Aorta (tissue), 5 donors: ENCODE measurements at regions of chr17 and their contacts with region 1.

Region 1: GRCh38 chr17:77834170-77835115 is 124.1 kb upstream of the TNRC6C start:
- DNase-seq: peak; percentile 90 to 92
- ATAC-seq: peak; percentile 55
- H3K4me3 ChIP-seq: no peak overlapping the region
- H3K27ac ChIP-seq: peak overlapping the region in 1 of 2 donors; percentile 43
- H3K4me1 ChIP-seq: no peaks in the 10 kb centered on the region
- H3K27me3 ChIP-seq: no peaks in the 10 kb centered on the region

Region 2: DNA sequence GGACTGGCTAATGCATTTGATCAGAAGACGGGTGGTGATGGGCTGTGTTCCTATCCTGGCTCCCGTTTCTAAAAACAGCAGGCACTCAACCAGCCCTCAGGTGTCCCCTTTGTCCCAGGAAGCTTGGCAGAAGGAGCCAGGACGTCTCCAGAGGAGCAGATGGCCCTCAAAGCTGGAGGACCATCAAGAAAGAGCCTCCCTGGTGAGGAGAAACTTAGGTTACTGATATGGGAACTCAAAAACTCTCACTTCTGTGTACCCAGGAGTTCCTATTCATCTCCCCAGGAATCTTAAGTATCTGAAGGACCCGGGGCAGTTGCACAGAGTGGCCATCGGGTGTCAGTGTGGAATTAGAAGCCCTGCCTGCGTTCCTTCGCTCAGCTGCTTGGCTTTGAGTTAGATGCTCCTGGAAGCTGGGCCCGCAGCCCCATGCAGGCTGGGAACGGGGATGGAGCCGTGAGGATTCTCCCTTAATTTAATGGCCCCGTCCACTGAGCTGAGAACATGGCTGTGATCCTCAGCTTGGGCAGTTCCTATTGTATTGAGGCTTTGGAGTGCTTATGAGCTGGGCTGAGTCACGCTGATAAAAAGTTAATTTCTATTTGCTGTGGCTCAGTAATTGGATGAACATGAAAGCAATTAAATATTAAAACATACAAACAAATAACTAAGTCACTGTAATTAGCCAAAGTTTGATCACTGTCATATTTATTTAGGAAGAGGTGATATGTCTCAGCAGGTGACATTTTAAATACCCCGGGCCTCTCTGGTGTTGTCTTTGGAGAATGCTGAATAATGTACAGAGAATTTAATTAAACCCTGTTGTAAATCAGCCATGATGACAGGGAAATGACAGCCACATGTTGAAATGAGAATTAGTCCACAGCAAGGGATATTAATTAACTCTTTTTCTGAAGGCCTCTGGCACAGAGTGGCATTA is 291.6 kb before region 1 on chr17:
- intact Hi-C with region 1: loop called in 1 of 2 experiments (anchors 5 kb)
- DNase-seq: peak; percentile 89
- ATAC-seq: peak; percentile 94
- H3K4me3 ChIP-seq: no peak overlapping the region
- H3K27ac ChIP-seq: no peak overlapping the region
- H3K4me1 ChIP-seq: no peaks in the 10 kb centered on the region
- H3K27me3 ChIP-seq: no peaks in the 10 kb centered on the region

Region 3: DNA sequence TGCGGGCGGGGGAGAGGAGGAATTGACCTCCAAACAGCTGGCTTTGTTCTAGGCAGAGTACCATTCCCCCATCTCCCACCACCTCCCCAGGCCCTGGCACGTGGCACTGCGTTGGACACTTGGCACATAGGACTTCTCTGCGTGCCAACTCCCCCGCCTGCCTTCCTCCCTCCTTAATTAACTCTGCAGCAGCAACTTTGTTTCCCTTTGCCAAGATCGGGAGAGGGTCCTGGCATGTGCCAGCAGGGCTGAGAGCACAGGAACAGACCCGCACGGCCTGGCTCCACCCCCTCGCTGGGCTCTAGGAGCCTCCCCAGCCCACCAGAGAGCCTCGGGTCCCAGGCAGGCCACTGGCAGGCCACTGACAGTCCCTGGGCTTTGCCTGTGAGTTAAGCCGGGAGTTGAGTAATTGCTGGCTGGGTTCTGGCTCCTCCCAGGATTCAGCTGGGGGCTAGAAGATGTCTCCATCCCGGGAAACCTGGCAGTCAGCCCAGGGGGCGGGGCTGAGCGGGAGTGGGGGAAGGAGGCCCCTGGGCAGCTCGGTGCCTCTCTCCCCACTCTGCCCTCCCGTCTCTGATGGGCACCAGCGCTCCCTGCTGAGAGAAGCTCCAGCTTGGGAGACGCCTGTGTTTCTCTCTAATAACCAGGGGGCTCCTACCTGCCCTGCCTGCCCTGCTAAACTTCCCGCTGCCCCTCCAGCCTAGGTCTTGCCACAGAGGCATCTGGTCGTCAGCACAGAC is 99.9 kb before region 1 on chr17:
- intact Hi-C with region 1: loop called in 1 of 2 experiments (anchors 5 kb)
- DNase-seq: peak; percentile 95 to 96
- ATAC-seq: peak; percentile 84
- H3K4me3 ChIP-seq: no peak overlapping the region
- H3K27ac ChIP-seq: peak overlapping the region in 1 of 2 donors; percentile 83
- H3K4me1 ChIP-seq: no peaks in the 10 kb centered on the region
- H3K27me3 ChIP-seq: no peaks in the 10 kb centered on the region

Region 4: DNA sequence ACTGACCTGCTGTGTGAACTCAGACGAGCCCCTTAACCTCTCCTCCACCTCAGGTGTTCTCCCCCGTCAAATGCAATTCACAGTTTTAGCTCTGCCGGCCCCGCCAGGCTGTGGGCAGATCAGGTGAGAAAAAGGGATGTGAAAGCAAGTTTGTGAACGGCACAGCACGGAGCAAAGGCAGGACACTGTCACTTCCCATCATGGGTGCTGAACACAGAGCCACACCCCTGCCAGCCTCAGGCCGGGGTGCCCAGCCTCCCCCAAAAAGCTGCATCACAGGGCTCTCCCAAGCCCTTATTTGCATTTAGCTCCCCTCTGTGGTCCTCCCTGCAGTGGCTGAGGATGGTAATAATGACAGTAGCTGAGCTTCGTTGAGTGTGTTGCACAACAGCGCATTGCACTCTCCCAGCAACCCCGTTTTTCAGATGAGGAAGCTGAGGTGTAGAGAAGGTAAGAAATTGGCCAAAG is 35.3 kb after region 1 on chr17:
- intact Hi-C with region 1: no loop called
- DNase-seq: peak; percentile 61 to 68
- ATAC-seq: no peak
- H3K4me3 ChIP-seq: no peak overlapping the region
- H3K27ac ChIP-seq: no peak overlapping the region
- H3K4me1 ChIP-seq: no peaks in the 10 kb centered on the region
- H3K27me3 ChIP-seq: no peaks in the 10 kb centered on the region

Region 5: DNA sequence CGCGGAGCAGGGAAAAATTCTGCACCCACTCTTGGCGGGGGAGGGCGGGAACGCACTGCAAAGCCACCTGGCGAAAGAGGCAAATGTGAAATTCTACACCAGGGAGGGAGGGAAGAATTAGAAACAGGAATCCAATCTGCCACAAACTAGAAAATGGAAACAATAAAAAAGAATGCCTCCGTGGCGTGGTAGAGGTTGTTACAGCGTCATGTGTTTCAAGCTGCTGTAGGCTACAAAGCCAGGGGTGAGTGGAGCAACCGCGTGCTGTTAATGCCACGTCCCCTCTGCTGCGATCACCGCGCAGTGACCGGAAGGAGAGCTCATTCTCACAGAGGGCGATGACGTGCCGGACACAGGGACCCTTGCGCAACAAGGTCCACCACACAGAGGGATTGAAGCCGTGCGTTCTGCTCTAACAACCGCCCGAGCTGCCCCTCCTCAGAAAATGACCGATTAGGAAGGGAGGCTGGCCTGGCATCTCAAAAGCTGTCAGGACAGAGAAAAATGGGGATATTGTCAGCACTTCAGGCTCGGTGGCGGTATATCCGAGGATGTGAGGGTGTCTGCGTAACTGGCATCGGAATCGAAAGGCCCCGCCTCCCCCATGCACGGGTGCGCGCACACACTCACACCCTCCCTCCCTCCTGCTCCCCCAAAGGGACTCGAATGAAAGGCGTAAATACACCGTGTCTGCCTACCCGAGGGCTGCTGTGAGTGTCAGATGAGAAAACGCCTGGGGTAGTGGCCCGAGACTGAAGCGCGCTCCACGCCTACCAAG is 53.2 kb after region 1 on chr17:
- intact Hi-C with region 1: loop called in 1 of 2 experiments (anchors 5 kb)
- DNase-seq: peak; percentile 94 to 97
- ATAC-seq: peak; percentile 94
- H3K4me3 ChIP-seq: peak overlapping the region; percentile 32 to 37
- H3K27ac ChIP-seq: peak overlapping the region in 1 of 2 donors; percentile 64
- H3K4me1 ChIP-seq: no peaks in the 10 kb centered on the region
- H3K27me3 ChIP-seq: no peaks in the 10 kb centered on the region

Region 6: GRCh38 chr17:78013683-78014467 is 179.4 kb after region 1 on chr17:
- intact Hi-C with region 1: loop called in 1 of 2 experiments (anchors 10 kb)
- DNase-seq: no peak
- ATAC-seq: peak; percentile 78
- H3K4me3 ChIP-seq: no peak overlapping the region
- H3K27ac ChIP-seq: peak overlapping the region in 1 of 2 donors; percentile 38
- H3K4me1 ChIP-seq: no peaks in the 10 kb centered on the region
- H3K27me3 ChIP-seq: no peaks in the 10 kb centered on the region